ENCODE measurements at regions of chr19 and their contacts with region 1.

Region 1: GRCh38 chr19:4791170-4792018 is at the start of gene FEM1A:
- DNase-seq: peak; percentile 99
- ATAC-seq: peak; percentile 97
- H3K4me3 Mint-ChIP-seq: peak within 1 kb of the TSS; percentile 81
- H3K27ac Mint-ChIP-seq: peak within 1 kb of the TSS; percentile 90
- H3K4me1 Mint-ChIP-seq: peaks cover 35% of the 10 kb centered on the region
- H3K27me3 Mint-ChIP-seq: no peaks in the 10 kb centered on the region
- total RNA-seq, gene FEM1A: 12.3 to 12.7 TPM

Region 2: GRCh38 chr19:4723367-4724187 is 67.8 kb before region 1 on chr19 and contains the start of gene DPP9:
- CTCF ChIA-PET with region 1: interaction called, 179 read pairs
- POLR2A ChIA-PET with region 1: interaction called, 15 read pairs
- DNase-seq: peak; percentile 98
- ATAC-seq: peak; percentile 93
- H3K4me3 Mint-ChIP-seq: peak within 1 kb of the TSS; percentile 100
- H3K27ac Mint-ChIP-seq: peak within 1 kb of the TSS; percentile 99
- H3K4me1 Mint-ChIP-seq: peaks cover 43% of the 10 kb centered on the region
- H3K27me3 Mint-ChIP-seq: no peaks in the 10 kb centered on the region
- total RNA-seq, gene DPP9: 99.2 to 103 TPM

Region 3: GRCh38 chr19:4738734-4739133 is 52.7 kb before region 1 on chr19:
- CTCF ChIA-PET with region 1: interaction called, 179 read pairs
- POLR2A ChIA-PET with region 1: interaction called, 4 read pairs
- DNase-seq: no peak
- ATAC-seq: no peak
- H3K4me3 Mint-ChIP-seq: no peak overlapping the region
- H3K27ac Mint-ChIP-seq: no peak overlapping the region
- H3K4me1 Mint-ChIP-seq: peaks cover 1% of the 10 kb centered on the region
- H3K27me3 Mint-ChIP-seq: peaks cover 7% of the 10 kb centered on the region

Region 4: DNA sequence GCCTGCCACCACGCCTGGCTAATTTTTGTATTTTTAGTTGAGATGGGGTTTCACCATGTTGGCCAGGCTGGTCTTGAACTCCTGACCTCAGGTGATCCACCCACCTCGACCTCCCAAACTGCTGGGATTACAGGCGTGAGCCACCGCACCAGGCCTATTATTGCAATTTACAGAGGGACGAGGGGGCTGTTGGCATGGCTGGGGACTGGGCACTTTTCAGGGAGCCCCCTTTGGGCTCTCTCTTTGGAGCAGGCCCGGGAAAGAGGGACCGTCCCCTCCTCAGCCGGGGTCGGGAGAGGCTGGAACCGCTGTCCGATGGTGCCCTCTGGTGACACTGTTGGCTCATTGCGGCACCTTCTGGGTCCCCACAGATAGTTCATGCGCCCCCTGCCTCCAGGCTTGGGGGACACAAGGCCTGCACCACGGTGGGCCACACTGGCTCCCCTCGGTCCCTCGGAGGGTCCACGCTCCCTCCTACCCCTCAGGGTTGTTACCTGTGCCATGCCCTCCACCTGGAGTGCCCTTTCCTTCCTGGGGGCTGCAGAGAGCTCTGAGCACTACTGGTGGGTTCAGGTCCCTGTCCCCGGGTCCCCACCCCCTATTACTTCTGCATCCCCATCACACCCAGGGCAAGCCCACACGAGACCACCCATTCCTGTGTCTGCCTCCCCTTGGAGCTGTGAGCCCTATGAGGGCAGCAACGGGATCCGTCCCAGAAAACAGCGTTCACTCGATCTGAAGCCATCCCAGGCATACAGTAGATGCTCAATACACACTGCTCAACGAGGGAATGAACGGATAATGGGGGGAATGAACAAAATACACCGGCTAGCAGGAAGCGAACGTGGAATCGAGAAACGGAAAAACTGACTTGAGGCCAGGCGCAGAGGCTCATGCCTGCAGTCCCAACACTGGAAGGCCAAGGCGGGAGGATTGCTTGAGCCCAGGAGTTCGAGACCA is 12.6 kb after region 1 on chr19:
- CTCF ChIA-PET with region 1: interaction called, 42 read pairs
- POLR2A ChIA-PET with region 1: no interaction called
- DNase-seq: peak; percentile 81
- ATAC-seq: peak; percentile 94
- H3K4me3 Mint-ChIP-seq: no peak overlapping the region
- H3K27ac Mint-ChIP-seq: no peak overlapping the region
- H3K4me1 Mint-ChIP-seq: no peaks in the 10 kb centered on the region
- H3K27me3 Mint-ChIP-seq: no peaks in the 10 kb centered on the region

Region 5: DNA sequence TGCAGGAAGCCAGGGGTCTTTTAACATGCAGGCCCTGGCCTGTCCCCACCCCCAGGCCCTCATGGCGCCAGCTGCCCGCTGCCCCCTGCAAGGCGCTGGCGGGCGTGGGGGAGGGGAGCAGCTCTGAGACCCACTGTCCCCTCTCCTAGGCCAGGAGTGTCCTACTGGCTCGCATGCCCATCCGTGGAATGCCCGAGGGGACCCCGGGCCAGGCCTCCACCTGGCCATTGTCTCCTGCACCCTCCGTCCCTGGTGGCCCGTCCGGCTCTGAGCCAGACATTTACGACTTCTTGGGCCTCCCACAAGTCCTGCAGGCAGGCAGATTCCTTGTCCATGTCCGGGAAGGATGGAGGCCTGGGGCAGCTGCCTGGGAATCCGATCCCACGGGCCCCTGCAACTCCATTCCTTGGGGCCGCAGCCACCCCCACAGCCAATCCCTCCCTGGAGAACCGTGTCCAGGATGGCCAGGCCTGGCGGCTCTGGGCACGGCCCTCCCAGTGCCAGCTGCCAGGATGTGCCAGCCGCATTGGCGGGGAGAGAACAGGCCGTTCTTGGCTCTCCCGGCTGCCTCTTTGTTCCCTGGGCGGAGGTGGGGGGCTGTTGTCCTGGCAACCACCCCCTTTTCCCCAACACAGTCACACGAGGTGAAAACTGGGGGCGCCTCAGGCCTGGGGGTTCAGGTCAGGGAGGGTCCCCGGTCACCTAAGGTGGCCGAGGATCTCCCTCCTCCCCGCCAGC is 86.5 kb after region 1 on chr19:
- CTCF ChIA-PET with region 1: no interaction called
- POLR2A ChIA-PET with region 1: no interaction called
- DNase-seq: no peak
- ATAC-seq: no peak
- H3K4me3 Mint-ChIP-seq: no peak overlapping the region
- H3K27ac Mint-ChIP-seq: no peak overlapping the region
- H3K4me1 Mint-ChIP-seq: peaks cover 9% of the 10 kb centered on the region
- H3K27me3 Mint-ChIP-seq: peaks cover 5% of the 10 kb centered on the region

Region 6: GRCh38 chr19:4909897-4910593 is 118.7 kb after region 1 on chr19:
- CTCF ChIA-PET with region 1: interaction called, 13 read pairs
- POLR2A ChIA-PET with region 1: interaction called, 3 read pairs
- DNase-seq: peak; percentile 98
- ATAC-seq: peak; percentile 83
- H3K4me3 Mint-ChIP-seq: peak overlapping the region; percentile 79
- H3K27ac Mint-ChIP-seq: peak overlapping the region; percentile 84
- H3K4me1 Mint-ChIP-seq: peaks cover 46% of the 10 kb centered on the region
- H3K27me3 Mint-ChIP-seq: no peaks in the 10 kb centered on the region

Region 7: DNA sequence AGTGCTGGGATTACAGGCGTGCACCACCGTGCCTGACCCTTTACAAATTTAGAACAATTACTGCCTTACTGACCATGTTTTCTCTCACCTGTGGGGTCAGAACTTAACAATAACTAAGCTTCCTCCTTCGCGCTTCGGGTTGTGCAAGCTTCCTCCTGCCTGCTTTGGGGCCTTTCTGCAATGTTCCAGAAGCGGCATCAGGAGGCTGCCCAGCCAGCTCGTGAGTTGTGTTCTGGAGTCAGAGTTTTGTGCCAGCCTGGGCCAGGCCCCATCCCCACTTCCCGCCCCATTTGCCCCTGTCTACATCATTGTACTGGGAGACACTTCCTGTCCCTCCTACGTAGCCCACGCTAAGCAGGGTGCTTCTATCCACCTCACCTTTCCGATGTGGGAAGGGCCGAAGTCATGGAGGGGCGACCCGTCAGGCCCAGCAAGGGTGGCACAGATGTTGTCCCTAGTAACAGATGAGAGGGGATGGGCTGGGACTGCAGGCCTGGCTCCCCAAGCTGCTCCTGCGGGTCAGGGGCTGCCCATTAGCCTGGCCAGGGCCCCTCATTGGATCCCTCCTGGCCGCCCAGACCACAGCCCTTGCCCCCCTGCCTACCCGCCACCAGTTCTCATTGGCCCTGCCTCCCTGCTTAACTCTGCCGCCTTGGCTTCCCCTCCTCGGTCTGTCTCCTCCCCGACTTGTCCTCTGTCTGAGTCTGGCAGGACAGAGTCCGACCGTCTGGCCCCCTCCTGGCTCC is 131.3 kb after region 1 on chr19:
- CTCF ChIA-PET with region 1: no interaction called
- POLR2A ChIA-PET with region 1: no interaction called
- DNase-seq: no peak
- ATAC-seq: no peak
- H3K4me3 Mint-ChIP-seq: no peak overlapping the region
- H3K27ac Mint-ChIP-seq: no peak overlapping the region
- H3K4me1 Mint-ChIP-seq: peaks cover 19% of the 10 kb centered on the region
- H3K27me3 Mint-ChIP-seq: no peaks in the 10 kb centered on the region